ENCODE measurements at regions of chr4 and their contacts with region 1.

Region 1: DNA sequence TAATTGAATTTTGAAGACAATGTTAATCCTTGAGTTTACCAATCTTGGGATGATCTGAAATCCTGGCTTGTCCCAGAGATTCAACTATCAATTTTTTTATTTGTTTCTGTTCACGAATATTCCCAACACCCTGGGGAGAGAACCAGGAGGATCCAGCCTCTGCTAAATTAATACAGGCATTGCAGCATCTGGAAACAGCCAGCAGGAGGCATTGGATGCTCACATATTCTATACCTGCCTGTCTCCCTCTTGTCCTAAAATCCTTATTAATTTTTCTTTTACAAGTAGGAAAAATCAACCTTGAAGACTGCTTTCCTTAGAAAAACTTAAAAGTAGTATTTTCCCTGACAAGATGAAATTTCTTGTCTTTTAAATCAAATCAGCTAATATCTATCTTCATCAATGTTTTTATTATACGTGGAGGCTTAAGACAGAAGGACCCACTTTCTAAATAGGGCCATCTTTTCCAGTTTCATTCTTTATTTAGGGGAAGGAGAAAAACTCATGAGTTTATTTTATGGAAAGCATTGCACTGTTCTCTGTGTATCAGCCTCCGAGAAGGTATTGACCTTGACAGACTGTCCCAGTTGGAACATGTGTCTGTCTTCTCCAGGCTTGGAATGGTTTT is 102.4 kb downstream of the CLNK start:
- DNase-seq: peak; percentile 23
- H3K4me3 ChIP-seq: no peak overlapping the region
- H3K27ac ChIP-seq: no peak overlapping the region
- H3K27me3 ChIP-seq: peaks cover 7% of the 10 kb centered on the region
- CTCF ChIP-seq: peak; percentile 95

Region 2: DNA sequence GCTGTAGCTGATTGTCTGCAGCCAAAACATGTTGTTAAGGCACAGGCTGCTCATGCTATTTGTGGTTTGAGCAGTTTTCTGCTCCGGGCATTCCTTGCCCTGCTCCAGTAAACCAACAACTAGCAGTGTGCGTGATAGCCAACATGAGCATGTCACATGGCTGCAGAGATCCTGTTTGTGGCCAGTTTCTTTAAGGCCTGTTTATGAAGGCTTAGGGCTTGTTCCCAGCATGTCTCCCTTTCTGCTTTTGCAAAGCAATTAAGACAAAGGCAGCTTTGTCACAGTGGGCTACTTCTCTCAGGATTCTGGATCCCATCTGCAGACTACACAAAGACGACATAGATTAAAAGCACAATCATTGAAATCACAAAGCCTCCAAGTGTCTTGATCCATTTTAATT is 285.4 kb before region 1 on chr4:
- CTCF ChIA-PET with region 1: no interaction called
- POLR2A ChIA-PET with region 1: no interaction called
- DNase-seq: no peak
- H3K4me3 ChIP-seq: no peak overlapping the region
- H3K27ac ChIP-seq: no peak overlapping the region
- H3K27me3 ChIP-seq: no peaks in the 10 kb centered on the region
- CTCF ChIP-seq: no peak

Region 3: DNA sequence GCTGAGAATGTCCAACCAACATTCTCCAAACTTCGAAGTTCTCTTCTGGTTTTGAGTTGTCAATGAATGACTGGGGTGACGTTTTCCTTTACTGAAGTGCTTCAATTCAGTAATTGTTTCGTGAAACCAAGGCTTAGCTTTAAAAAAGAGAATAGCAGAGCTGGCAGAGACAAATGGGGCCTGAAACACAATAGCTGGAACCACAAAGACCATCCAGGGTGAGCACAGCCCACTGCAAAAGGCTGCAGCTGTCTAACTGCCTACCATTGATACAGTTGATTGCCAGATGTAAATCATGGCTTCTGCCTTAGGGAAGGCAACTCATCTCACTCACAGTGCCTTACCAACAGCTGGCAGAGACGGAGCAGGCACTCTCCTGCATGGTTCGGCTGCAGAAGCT is 46.3 kb before region 1 on chr4:
- CTCF ChIA-PET with region 1: no interaction called
- POLR2A ChIA-PET with region 1: no interaction called
- DNase-seq: no peak
- H3K4me3 ChIP-seq: no peak overlapping the region
- H3K27ac ChIP-seq: no peak overlapping the region
- H3K27me3 ChIP-seq: no peaks in the 10 kb centered on the region
- CTCF ChIP-seq: no peak

Region 4: GRCh38 chr4:10571909-10572308 is 10.3 kb before region 1 on chr4:
- CTCF ChIA-PET with region 1: interaction called, 12 read pairs
- POLR2A ChIA-PET with region 1: no interaction called
- DNase-seq: no peak
- H3K4me3 ChIP-seq: no peak overlapping the region
- H3K27ac ChIP-seq: no peak overlapping the region
- H3K27me3 ChIP-seq: peaks cover 4% of the 10 kb centered on the region
- CTCF ChIP-seq: no peak

Region 5: GRCh38 chr4:11149612-11150259 is 567.6 kb after region 1 on chr4:
- CTCF ChIA-PET with region 1: no interaction called
- POLR2A ChIA-PET with region 1: no interaction called
- DNase-seq: no peak
- H3K4me3 ChIP-seq: no peak overlapping the region
- H3K27ac ChIP-seq: no peak overlapping the region
- H3K27me3 ChIP-seq: no peaks in the 10 kb centered on the region
- CTCF ChIP-seq: no peak

Region 6: DNA sequence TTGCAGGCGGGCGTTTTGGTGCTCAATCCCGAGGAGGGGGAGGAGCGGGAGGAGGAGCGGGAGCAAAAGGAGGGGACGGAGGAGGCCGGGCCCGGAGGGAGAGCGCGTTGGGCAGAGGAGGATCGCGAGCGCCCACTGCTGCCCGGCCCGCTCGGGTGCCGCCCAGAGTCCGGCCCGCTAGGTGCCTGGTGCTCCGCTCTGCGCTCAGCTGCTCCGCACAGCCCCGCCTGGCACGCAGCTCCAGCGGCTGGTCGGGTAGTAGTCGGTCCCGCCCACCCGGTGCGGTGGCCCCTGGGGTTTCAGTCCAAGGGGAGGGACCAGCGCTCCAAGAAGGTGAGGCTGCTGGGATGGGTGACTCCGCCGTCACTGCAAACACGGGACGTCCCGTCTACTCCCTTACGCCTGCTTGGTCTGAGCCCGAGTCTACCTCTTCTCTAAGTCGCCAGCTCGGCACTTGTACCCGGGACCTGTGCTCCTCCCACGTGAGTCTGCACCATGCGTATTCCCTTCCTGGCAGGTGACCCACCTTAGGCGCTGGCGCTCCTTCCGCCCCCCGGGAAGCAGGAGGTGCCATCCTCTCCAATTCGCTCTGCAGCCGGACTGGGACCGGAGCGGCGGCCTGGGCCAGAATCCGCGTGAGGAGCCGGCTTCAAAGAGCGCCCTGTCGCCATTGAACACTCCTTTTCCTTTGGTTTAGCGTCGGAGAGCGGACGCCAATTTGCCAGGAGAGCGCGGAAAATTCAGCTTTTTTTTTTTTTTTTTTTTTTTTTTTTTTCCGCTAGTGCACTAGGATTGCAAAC is 846.9 kb after region 1 on chr4:
- CTCF ChIA-PET with region 1: interaction called, 10 read pairs
- POLR2A ChIA-PET with region 1: no interaction called
- DNase-seq: no peak
- H3K4me3 ChIP-seq: peak overlapping the region; percentile 45
- H3K27ac ChIP-seq: no peak overlapping the region
- H3K27me3 ChIP-seq: peaks cover 41% of the 10 kb centered on the region
- CTCF ChIP-seq: peak; percentile 50